ENCODE measurements at regions of chr11 and their contacts with region 1.

Region 1: GRCh38 chr11:73177778-73178577 is 35.9 kb upstream of the FCHSD2 start:
- DNase-seq: peak; percentile 85 to 92 (median 91)
- H3K4me3 ChIP-seq: peak overlapping the region in 2 of 7 experiments; percentile 20 to 23
- H3K27ac ChIP-seq: peak overlapping the region in 1 of 2 experiments; percentile 35
- H3K4me1 ChIP-seq: peaks cover 0 to 25% (median 17%) of the 10 kb centered on the region in 4 experiments
- H3K27me3 ChIP-seq: no peaks in the 10 kb centered on the region

Region 2: GRCh38 chr11:72831513-72832300 is 346.3 kb before region 1 on chr11:
- CTCF ChIA-PET with region 1: interaction called, 75 read pairs
- POLR2A ChIA-PET with region 1: no interaction called
- DNase-seq: peak; percentile 62 to 81 (median 79)
- H3K4me3 ChIP-seq: no peak overlapping the region
- H3K27ac ChIP-seq: no peak overlapping the region
- H3K4me1 ChIP-seq: peaks cover 0 to 11% (median 4%) of the 10 kb centered on the region in 4 experiments
- H3K27me3 ChIP-seq: no peaks in the 10 kb centered on the region

Region 3: GRCh38 chr11:72924568-72925190 is 253.3 kb before region 1 on chr11:
- CTCF ChIA-PET with region 1: interaction called, 72 read pairs
- POLR2A ChIA-PET with region 1: interaction called, 4 read pairs
- DNase-seq: peak; percentile 53 to 64 (median 60)
- H3K4me3 ChIP-seq: no peak overlapping the region
- H3K27ac ChIP-seq: no peak overlapping the region
- H3K4me1 ChIP-seq: peaks cover 0 to 2% (median 0%) of the 10 kb centered on the region in 4 experiments
- H3K27me3 ChIP-seq: no peaks in the 10 kb centered on the region

Region 4: DNA sequence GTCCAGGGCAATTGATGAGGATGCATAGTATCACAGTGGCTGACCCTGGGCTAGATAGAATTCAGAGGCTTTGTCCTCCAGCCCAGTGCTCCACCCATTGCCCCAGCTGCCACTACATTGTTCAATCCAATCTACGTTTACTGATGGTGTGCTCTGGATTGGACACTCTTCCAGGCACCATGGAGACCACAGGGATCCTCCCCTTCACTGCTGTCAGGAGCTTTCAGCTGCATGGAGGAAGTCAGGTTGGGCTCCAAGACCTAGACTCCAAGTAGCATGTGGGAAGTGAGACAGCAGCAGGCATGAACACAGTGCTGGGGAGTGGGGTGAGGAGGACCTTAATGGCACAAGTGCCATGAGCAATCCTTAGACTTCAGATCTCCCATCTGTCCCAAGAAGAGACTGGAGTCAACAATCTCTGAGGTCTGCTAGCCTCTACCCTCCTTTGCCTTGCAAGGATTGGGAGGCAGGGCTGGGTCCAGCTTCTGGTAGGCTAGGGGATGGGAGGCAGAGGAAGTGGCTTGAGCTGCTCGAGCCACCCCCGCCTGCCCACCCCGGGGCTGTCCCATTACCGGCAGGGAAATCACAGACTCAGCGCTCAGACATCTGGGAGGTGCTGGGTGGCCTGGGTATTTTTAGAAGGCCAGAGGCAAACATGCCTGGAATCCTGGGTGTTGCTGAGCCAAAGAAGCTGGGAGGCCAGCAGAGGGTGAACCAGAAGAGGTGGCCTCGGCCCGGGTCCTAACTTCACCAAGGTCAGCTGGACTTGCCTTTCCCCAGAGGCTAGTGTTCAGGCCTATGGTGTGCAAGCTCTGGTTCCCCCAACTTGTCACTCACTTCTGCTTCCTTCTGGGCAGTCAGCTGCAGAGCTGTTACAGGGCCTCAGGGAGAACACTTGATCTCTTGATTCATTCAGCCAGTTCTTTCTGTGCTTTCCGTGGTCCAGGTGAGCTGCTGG is 20.6 kb before region 1 on chr11:
- CTCF ChIA-PET with region 1: interaction called, 103 read pairs
- POLR2A ChIA-PET with region 1: interaction called, 7 read pairs
- DNase-seq: peak in 2 of 3 donors; percentile 48 to 58
- H3K4me3 ChIP-seq: no peak overlapping the region
- H3K27ac ChIP-seq: no peak overlapping the region
- H3K4me1 ChIP-seq: peaks cover 20 to 73% (median 69%) of the 10 kb centered on the region in 4 experiments
- H3K27me3 ChIP-seq: no peaks in the 10 kb centered on the region

Region 5: GRCh38 chr11:73236854-73237253 is 58.9 kb after region 1 on chr11:
- CTCF ChIA-PET with region 1: interaction called, 272 read pairs
- POLR2A ChIA-PET with region 1: no interaction called
- DNase-seq: peak; percentile 57 to 79 (median 70)
- H3K4me3 ChIP-seq: no peak overlapping the region
- H3K27ac ChIP-seq: no peak overlapping the region
- H3K4me1 ChIP-seq: no peaks in the 10 kb centered on the region
- H3K27me3 ChIP-seq: no peaks in the 10 kb centered on the region